Right ventricle myocardium inferior (tissue), 1 donor: ENCODE measurements at regions of chr4 and their contacts with region 1.

Region 1: DNA sequence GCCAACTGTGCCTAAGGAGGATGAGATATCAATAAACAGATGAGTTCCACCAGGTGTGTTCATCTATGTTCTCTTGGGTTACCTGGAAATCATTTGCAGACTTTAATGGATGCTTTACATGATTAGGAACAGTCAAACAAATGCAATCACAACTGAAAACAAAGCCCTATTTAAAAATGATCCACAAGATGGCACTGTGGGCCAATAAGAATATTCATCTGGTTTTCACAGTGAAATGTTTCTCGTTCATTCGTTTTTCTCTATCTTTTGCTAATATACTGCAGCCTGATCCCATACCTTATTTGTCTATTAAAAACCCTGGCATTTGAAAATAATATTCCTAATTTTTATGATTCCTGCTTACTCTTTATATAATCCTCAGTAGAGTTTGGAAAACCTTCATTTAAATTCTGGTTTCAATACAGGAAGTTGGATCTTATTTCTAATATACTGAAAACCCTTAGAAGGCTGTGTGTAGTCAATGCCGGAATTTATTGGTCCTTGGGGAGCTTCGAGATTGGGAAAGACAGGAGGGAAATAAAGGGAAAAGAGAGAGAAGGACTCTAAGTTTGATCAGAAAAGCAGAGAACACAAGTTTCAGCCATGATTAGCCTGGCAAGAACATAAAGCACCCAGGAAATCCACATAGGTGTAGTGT is 63.8 kb upstream of the TAPT1 start:
- DNase-seq: no peak
- ATAC-seq: no peak

Region 2: DNA sequence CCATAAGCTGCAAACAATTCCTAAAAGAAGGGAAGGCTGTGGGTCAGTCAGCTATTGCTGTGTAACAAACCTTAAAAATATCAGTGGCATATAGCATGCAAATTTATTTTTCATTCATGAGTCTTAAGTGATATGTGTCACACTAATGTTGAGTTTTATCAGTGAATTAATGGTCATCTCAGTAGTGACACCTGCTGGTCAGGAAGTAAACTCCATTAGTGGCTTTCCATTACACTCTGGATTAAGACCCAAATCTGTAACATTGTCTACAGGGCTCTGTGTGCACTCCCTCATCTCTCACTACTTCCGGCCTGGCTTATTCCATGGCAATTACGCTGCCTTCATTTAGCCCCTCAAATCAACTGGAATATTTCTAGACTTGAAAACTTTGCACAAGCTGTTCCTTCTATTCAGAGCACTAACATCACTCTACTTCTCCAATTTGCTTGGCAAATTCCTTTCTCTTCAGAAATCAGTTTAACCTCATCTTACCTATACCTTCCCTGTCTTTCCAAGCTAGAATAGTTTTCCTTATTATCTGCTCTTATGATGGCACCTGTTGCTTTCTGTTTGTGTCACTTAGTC is 153.6 kb after region 1 on chr4:
- intact Hi-C with region 1: loop called (anchors 2 kb)
- DNase-seq: no peak
- ATAC-seq: no peak

Region 3: GRCh38 chr4:16537926-16538325 is 247.9 kb after region 1 on chr4:
- intact Hi-C with region 1: no loop called
- DNase-seq: no peak
- ATAC-seq: no peak